ENCODE measurements at regions of chr5 and their contacts with region 1.

Region 1: DNA sequence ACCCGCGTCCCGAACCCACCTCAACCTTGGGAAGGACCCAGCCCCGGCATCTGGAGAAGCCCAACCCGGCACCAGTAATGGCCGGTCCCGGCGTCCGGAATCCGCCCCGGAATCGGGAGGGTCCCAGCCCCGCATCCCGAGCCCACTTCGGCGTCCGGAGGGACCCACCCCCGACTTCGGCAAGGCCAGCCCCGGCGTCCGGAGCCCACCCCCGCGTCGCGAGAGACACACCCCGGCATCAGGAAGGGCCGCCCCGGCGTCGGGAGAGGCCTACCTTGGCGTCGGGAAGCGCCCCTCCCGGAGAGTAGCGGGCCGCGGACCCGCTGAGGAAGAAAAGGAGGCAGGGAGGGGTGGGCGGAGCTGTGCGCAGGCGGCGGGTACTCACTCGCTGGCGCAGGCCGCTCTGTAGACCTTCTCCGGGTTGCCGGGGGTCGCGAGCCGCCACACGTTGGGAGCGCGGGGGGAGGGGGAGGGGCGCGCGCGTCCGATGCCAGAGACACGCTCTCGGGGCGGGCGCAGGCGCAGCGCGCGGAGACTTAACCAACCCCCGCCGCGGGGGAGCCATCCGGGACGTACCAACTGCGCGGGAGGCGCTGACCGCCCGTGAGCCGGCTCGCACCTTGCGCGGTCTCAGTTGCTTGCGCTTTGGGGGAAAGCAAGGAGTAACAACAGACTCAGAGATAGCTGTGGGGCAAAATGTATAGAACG is at the start of gene UIMC1:
- DNase-seq: peak; percentile 96
- H3K4me3 Mint-ChIP-seq: peak within 1 kb of the TSS; percentile 96
- H3K27ac Mint-ChIP-seq: peak within 1 kb of the TSS; percentile 98
- H3K4me1 Mint-ChIP-seq: peaks cover 18% of the 10 kb centered on the region
- H3K27me3 Mint-ChIP-seq: no peaks in the 10 kb centered on the region
- CTCF ChIP-seq: no peak
- total RNA-seq, gene UIMC1: 79.3 and 96.3 TPM in 2 replicates

Region 2: DNA sequence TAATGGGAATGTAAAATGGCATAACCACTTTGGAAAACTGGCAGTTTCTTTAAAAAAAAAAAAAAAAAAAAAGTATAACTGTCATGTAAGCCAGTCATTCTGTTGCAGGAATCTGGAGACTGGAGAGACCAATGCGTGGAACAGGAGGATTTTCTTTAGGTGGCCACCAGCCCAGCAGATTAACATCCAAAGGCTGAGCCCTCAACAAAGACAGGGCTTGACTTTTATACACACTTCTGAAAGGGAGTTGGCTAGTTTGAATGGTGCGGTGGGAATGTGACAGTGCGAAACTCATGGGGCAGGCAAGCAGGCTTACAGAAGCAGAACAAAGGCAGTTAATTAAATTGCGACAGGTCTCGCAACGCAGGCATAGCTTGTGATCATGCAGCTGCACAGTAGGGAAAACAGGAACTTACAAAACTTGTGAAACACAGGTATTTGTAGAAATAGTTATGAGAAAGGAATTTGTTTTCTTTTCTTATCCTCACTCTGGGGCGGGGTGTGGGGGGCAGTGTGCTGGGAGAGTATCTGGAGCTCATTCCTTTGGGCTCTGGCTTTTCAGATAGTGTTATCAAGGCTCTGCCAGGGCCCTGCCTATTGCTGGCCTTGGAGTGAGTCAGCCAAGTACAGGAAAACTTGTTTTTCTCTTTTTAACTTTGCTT is 11.8 kb before region 1 on chr5:
- CTCF ChIA-PET with region 1: interaction called, 14 read pairs
- POLR2A ChIA-PET with region 1: interaction called, 21 read pairs
- intact Hi-C with region 1: no loop called
- DNase-seq: peak; percentile 75
- H3K4me3 Mint-ChIP-seq: no peak overlapping the region
- H3K27ac Mint-ChIP-seq: peak overlapping the region; percentile 59
- H3K4me1 Mint-ChIP-seq: peaks cover 40% of the 10 kb centered on the region
- H3K27me3 Mint-ChIP-seq: no peaks in the 10 kb centered on the region
- CTCF ChIP-seq: no peak

Region 3: GRCh38 chr5:177022384-177023308 is 16.2 kb after region 1 on chr5 and contains the start of gene ZNF346:
- CTCF ChIA-PET with region 1: interaction called, 6 read pairs
- POLR2A ChIA-PET with region 1: interaction called, 136 read pairs
- intact Hi-C with region 1: loop called (anchors 2 kb)
- DNase-seq: peak; percentile 98
- H3K4me3 Mint-ChIP-seq: peak within 1 kb of the TSS; percentile 92
- H3K27ac Mint-ChIP-seq: peak within 1 kb of the TSS; percentile 98
- H3K4me1 Mint-ChIP-seq: peaks cover 29% of the 10 kb centered on the region
- H3K27me3 Mint-ChIP-seq: no peaks in the 10 kb centered on the region
- CTCF ChIP-seq: peak; percentile 46
- total RNA-seq, gene ZNF346: 32.5 and 36.6 TPM in 2 replicates